Naive thymus-derived CD4-positive, alpha-beta T cell (primary cell): ENCODE measurements at regions of chr11 and their contacts with region 1.

Region 1: GRCh38 chr11:66311965-66312548 is 4.8 kb downstream of the CD248 start:
- DNase-seq: peak; percentile 93 to 100 (median 100)
- ATAC-seq: peak; percentile 84
- H3K4me3 ChIP-seq: peak overlapping the region; percentile 92
- H3K4me3 Mint-ChIP-seq: peak overlapping the region; percentile 63 to 97 (median 94)
- H3K27ac ChIP-seq: peak overlapping the region; percentile 79
- H3K27ac Mint-ChIP-seq: peak overlapping the region; percentile 93 to 100 (median 98)
- H3K4me1 ChIP-seq: peaks cover 11 to 34% of the 10 kb centered on the region in 2 donors
- H3K4me1 Mint-ChIP-seq: peaks cover 17 to 34% (median 25%) of the 10 kb centered on the region in 7 donors
- H3K27me3 ChIP-seq: no peaks in the 10 kb centered on the region
- H3K27me3 Mint-ChIP-seq: peaks cover 0 to 2% (median 0%) of the 10 kb centered on the region in 5 donors

Region 2: DNA sequence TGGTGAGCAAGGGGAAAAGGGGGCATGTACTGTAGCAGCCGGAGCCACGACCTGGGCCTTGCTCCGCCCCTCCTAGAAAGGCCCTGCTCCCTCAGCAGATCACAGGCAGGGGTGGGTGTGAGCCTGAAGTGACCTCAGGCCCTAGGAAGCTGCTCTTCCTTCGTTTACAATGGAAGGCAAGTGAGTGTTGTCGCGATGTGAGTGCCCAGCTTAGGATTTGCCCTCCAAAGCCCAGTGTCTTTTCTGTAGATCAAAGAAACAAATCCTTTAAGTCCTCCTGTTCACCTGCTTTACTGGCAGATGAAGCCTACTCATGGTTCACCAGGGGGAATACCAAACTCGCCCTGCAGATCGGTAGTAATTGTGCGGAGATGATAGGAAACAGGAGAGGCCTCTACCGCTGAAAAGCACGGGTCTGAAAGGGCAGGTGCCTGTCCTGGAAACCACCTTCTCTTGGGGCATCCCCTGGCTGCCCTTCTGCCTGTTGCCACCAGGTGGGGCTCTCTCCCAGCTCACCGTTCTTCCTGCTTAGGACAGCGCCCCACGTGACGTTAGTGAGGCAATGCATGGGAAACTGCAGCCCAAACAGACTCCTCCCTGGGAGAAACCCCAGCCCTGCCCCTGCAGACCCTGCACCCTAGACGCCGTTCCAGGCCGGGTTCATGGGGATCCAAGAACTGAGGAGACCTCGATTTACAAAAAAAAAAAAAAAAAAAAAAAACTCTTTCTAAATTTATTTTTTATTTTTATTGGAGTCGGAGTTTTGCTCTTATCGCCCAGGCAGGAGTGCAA is 89.5 kb before region 1 on chr11:
- CTCF ChIA-PET with region 1: no interaction called
- POLR2A ChIA-PET with region 1: no interaction called
- intact Hi-C with region 1: loop called in 1 of 2 experiments (anchors 1 kb)
- DNase-seq: peak; percentile 79 to 95 (median 92)
- ATAC-seq: peak; percentile 100
- H3K4me3 ChIP-seq: no peak overlapping the region
- H3K4me3 Mint-ChIP-seq: peak overlapping the region in 4 of 10 donors; percentile 26 to 35 (median 32)
- H3K27ac ChIP-seq: peak overlapping the region; percentile 89
- H3K27ac Mint-ChIP-seq: peak overlapping the region; percentile 78 to 98 (median 92)
- H3K4me1 ChIP-seq: peaks cover 4 to 7% of the 10 kb centered on the region in 2 donors
- H3K4me1 Mint-ChIP-seq: peaks cover 12 to 21% (median 18%) of the 10 kb centered on the region in 7 donors
- H3K27me3 ChIP-seq: no peaks in the 10 kb centered on the region
- H3K27me3 Mint-ChIP-seq: no peaks in the 10 kb centered on the region

Region 3: DNA sequence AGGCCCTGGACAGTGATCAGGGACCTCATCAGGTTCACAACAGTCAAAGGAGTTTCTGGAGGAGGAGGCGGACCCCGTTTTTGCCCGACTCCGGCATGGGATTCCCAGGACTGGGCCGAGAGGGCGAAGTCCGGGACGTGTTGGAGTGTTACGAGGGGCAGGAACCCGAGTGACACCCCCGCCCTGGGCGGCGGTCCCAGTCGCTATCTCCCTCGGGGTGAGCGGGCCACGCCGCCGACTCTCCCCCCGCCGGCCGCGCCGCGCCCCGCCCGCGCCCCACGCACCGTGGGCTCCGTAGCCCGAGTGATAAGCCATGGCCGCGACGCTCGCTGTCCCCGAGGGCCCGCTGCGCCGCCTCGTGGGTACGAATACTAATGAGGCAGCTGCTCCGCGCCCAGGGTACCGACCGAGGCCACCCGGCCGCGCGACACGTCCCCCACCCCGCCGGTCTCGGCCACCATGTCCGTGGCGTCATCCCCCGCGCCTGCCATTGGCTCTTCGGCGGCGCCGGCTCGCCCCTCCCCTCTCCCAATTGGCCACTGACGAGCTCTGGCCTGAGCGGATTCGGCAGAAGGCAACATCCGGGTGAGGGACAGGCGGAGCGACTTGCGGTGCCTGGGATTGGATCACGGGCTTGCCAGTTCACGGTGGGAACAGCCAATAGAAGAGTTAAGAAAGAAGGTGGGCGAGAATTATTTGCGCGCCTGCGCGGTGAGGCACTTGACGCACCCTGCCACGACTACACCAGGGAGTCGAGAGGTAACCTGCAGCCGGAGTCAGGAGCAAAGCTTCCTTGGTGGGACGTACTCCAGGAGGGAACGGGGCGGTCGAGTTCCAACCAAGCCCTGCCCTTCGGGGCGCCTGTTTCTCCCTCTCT is 23.1 kb before region 1 on chr11 and contains the start of gene YIF1A:
- CTCF ChIA-PET with region 1: interaction called, 12 read pairs
- POLR2A ChIA-PET with region 1: interaction called, 15 read pairs
- intact Hi-C with region 1: loop called (anchors 1 kb)
- DNase-seq: peak; percentile 92 to 99 (median 99)
- ATAC-seq: peak; percentile 96
- H3K4me3 ChIP-seq: peak within 1 kb of the TSS; percentile 99
- H3K4me3 Mint-ChIP-seq: peak within 1 kb of the TSS; percentile 86 to 96 (median 90)
- H3K27ac ChIP-seq: peak within 1 kb of the TSS; percentile 76
- H3K27ac Mint-ChIP-seq: peak within 1 kb of the TSS; percentile 74 to 97 (median 92)
- H3K4me1 ChIP-seq: peaks cover 18 to 19% of the 10 kb centered on the region in 2 donors
- H3K4me1 Mint-ChIP-seq: peaks cover 17 to 46% (median 37%) of the 10 kb centered on the region in 7 donors
- H3K27me3 ChIP-seq: peaks cover 0 to 7% of the 10 kb centered on the region in 2 donors
- H3K27me3 Mint-ChIP-seq: peaks cover 13 to 35% (median 13%) of the 10 kb centered on the region in 5 donors
- total RNA-seq, gene YIF1A: 25.0 to 66.2 (median 33.3) TPM

Region 4: GRCh38 chr11:66344550-66345315 is 32.7 kb after region 1 on chr11 and contains the start of gene BRMS1:
- CTCF ChIA-PET with region 1: interaction called, 40 read pairs
- POLR2A ChIA-PET with region 1: interaction called, 68 read pairs
- intact Hi-C with region 1: loop called (anchors 1 kb)
- DNase-seq: peak; percentile 85 to 98 (median 93)
- ATAC-seq: peak; percentile 94
- H3K4me3 ChIP-seq: peak within 1 kb of the TSS; percentile 73
- H3K4me3 Mint-ChIP-seq: peak within 1 kb of the TSS; percentile 94 to 98 (median 96)
- H3K27ac ChIP-seq: peak within 1 kb of the TSS; percentile 92
- H3K27ac Mint-ChIP-seq: peak within 1 kb of the TSS; percentile 91 to 98 (median 96)
- H3K4me1 ChIP-seq: peaks cover 30 to 36% of the 10 kb centered on the region in 2 donors
- H3K4me1 Mint-ChIP-seq: peaks cover 25 to 62% (median 52%) of the 10 kb centered on the region in 7 donors
- H3K27me3 ChIP-seq: no peaks in the 10 kb centered on the region
- H3K27me3 Mint-ChIP-seq: peaks cover 0 to 4% (median 0%) of the 10 kb centered on the region in 5 donors
- total RNA-seq, gene BRMS1: 35.9 to 50.8 (median 48.4) TPM

Region 5: DNA sequence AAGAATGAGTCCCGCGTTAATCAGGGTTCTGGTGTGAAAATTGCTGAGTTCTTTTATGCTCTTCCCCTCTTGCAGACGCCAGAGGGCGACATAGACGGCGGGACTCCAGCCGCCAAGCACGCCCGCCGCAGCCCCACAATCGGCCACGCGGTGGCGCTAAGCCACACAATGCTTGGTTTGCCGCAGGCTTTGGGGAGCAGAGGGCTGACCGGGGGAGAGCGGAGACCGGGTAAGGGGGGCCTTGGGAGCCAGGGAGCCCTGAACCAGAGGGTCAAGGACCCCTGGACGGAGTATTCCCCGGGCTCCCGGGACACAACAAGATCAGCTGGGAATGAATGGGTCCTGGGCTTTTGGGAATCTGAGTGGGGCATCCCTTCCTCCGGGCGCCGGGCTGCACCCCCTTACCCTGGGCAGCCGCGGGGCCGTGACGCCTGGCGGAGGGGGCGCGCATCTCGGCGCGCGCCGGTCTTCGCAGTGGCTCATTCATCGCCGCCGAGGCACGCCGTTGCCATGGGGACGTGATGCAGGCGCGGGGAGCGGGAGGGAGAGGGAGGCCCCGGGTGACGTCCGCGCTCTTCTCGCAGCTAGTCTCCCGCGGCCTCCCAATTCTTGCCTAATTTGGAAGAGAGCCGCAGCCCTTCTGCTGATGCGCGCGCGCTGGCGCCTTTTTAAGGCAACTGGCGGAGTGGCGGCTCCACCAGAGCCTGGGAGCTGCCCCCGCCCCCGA is 96.6 kb after region 1 on chr11:
- CTCF ChIA-PET with region 1: no interaction called
- POLR2A ChIA-PET with region 1: no interaction called
- intact Hi-C with region 1: no loop called
- DNase-seq: peak; percentile 81 to 98 (median 88)
- ATAC-seq: peak; percentile 98
- H3K4me3 ChIP-seq: peak overlapping the region; percentile 51
- H3K4me3 Mint-ChIP-seq: peak overlapping the region; percentile 42 to 86 (median 84)
- H3K27ac ChIP-seq: no peak overlapping the region
- H3K27ac Mint-ChIP-seq: peak overlapping the region in 3 of 9 donors; percentile 4 to 75 (median 20)
- H3K4me1 ChIP-seq: peaks cover 4 to 5% of the 10 kb centered on the region in 2 donors
- H3K4me1 Mint-ChIP-seq: peaks cover 0 to 5% (median 4%) of the 10 kb centered on the region in 7 donors
- H3K27me3 ChIP-seq: no peaks in the 10 kb centered on the region
- H3K27me3 Mint-ChIP-seq: peaks cover 17 to 35% (median 28%) of the 10 kb centered on the region in 5 donors

Region 6: GRCh38 chr11:66429983-66430602 is 118.0 kb after region 1 on chr11:
- CTCF ChIA-PET with region 1: no interaction called
- POLR2A ChIA-PET with region 1: interaction called, 3 read pairs
- intact Hi-C with region 1: loop called in 1 of 2 experiments (anchors 1 kb)
- DNase-seq: peak; percentile 41 to 75 (median 53)
- ATAC-seq: peak; percentile 80
- H3K4me3 ChIP-seq: no peak overlapping the region
- H3K4me3 Mint-ChIP-seq: no peak overlapping the region
- H3K27ac ChIP-seq: no peak overlapping the region
- H3K27ac Mint-ChIP-seq: no peak overlapping the region
- H3K4me1 ChIP-seq: no peaks in the 10 kb centered on the region
- H3K4me1 Mint-ChIP-seq: peaks cover 0 to 6% (median 0%) of the 10 kb centered on the region in 7 donors
- H3K27me3 ChIP-seq: no peaks in the 10 kb centered on the region
- H3K27me3 Mint-ChIP-seq: no peaks in the 10 kb centered on the region

Region 7: DNA sequence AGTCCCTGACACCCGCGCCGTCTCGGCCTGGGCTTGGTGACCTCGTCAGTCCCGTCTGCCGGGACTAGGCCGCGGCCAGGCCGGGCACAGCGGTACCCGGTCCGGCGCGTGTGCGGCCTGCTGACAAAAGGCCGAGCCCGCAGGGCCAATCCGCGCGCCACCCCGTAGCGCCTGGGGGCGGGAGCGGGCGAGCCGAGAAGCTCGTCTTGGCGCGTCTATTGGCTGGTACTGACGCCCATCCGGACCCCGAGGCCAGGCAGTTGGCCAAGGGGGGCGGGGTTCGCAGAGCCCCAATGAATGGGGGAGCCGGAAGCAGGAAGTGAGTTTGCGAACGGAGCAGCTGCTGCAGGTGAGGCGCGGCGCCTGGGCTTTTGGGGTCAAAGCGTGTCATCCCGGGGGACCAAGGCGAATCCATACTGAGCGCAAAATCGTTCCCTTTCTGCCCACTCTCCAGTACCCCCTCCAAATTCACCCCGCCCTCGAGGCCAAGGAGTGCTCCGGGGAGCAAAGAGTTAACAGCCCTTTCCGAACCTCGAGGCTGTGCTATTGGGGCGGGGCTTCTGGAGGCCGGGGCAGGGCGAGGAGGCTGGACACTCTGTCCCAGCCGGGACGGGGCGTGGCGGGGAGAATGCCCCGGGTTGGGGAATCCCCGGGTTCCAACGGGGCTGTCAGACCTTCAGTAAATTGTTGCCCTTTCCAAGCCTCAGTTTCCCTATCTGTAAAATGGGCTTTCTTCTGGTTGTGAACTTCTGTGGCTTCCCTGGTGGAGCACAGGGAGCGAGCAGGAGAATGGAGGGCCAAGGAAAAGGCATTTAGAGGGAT is 168.3 kb after region 1 on chr11 and contains the start of gene DPP3:
- CTCF ChIA-PET with region 1: no interaction called
- POLR2A ChIA-PET with region 1: no interaction called
- intact Hi-C with region 1: loop called in 1 of 2 experiments (anchors 1 kb)
- DNase-seq: peak; percentile 87 to 97 (median 95)
- ATAC-seq: peak; percentile 99
- H3K4me3 ChIP-seq: peak within 1 kb of the TSS; percentile 86
- H3K4me3 Mint-ChIP-seq: peak within 1 kb of the TSS; percentile 86 to 92 (median 90)
- H3K27ac ChIP-seq: peak within 1 kb of the TSS; percentile 90
- H3K27ac Mint-ChIP-seq: peak within 1 kb of the TSS; percentile 75 to 91 (median 90)
- H3K4me1 ChIP-seq: peaks cover 9 to 14% of the 10 kb centered on the region in 2 donors
- H3K4me1 Mint-ChIP-seq: peaks cover 9 to 37% (median 17%) of the 10 kb centered on the region in 7 donors
- H3K27me3 ChIP-seq: no peaks in the 10 kb centered on the region
- H3K27me3 Mint-ChIP-seq: no peaks in the 10 kb centered on the region
- total RNA-seq, gene DPP3: 15.8 to 75.7 (median 19.4) TPM